Endothelial cell of umbilical vein (primary cell): ENCODE measurements at regions of chr7 and their contacts with region 1.

Region 1: DNA sequence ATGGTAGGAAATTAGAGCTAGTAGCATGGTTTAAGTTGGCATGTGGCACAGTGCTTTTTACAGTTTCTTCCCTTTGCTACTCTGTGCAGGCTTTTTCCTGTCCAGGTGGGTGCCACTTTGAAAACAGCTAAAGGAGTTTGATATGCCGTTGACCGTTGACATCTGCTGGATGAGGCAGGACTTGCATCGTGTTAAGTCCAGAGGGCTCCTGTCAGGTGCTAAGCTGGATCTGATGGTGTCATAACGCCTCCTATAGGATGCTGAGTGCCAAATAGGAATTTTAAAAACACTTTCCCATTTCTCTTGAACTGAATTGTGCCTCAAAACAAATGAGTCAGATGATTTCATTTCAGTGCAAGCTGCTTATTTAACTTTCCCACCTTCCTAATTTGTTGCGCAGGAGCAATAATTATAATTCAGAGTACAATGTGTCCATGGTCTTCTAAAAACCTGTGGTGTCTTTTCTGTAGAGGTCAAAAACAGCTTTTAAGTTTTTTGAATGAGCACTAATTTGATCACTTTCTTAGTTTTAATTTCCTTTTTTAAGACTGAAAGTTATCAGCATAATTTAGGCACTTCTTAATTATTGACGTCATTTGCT is 178.3 kb downstream of the CDCA7L start:
- DNase-seq: peak; percentile 60
- H3K4me3 ChIP-seq: no peak overlapping the region
- H3K27ac ChIP-seq: no peak overlapping the region
- H3K4me1 ChIP-seq: no peaks in the 10 kb centered on the region
- H3K27me3 ChIP-seq: peaks cover 8% of the 10 kb centered on the region in 2 experiments
- CTCF ChIP-seq: peak; percentile 42 to 47
- POLR2A ChIP-seq: no peak

Region 2: DNA sequence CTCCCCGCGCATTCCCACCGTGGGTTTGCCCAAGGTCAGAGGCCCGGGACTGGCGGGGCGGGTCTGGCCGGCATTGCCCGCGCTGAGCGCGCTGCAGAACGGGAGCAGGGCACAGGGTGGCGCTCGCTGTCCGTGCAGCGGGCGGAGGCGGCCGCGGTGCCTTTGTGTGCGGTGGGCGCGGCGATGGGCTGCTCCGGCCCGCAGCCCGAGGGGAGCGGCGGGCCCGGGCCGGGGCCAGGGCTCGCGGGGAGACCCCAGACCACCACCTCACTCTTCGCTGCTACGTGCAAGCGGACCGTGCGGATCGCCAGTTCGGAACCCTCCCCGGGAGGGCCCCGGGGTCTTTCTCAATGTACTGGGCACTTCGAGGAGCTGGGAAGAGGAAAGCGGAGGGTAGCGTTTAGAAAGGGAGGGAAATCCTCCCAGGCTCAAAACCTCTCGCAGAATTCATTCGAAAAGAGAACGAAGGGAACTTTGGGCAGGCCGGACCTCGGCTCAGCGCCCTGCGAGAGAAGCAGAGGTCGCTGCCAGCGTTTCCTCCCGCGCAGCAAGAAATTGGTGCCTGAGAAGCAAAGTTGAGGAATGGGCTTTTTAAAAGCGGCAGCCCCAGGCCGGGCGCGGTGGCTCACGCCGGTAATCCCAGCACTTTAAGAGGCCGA is 989.2 kb before region 1 on chr7:
- CTCF ChIA-PET with region 1: interaction called, 7 read pairs
- POLR2A ChIA-PET with region 1: no interaction called
- dilution Hi-C with region 1: no loop called
- intact Hi-C with region 1: loop called (anchors 2 kb)
- DNase-seq: peak; percentile 30
- H3K4me3 ChIP-seq: peak overlapping the region in 2 of 3 experiments; percentile 30 to 46
- H3K27ac ChIP-seq: no peak overlapping the region
- H3K4me1 ChIP-seq: peaks cover 5% of the 10 kb centered on the region
- H3K27me3 ChIP-seq: peaks cover 54 to 86% of the 10 kb centered on the region in 2 experiments
- CTCF ChIP-seq: peak; percentile 72 to 78
- POLR2A ChIP-seq: no peak

Region 3: GRCh38 chr7:21261627-21262594 is 505.5 kb before region 1 on chr7:
- CTCF ChIA-PET with region 1: interaction called, 35 read pairs
- POLR2A ChIA-PET with region 1: no interaction called
- dilution Hi-C with region 1: no loop called
- intact Hi-C with region 1: loop called (anchors 1 kb)
- DNase-seq: peak; percentile 67
- H3K4me3 ChIP-seq: no peak overlapping the region
- H3K27ac ChIP-seq: no peak overlapping the region
- H3K4me1 ChIP-seq: peaks cover 2% of the 10 kb centered on the region
- H3K27me3 ChIP-seq: no peaks in the 10 kb centered on the region
- CTCF ChIP-seq: peak; percentile 67 to 68
- POLR2A ChIP-seq: no peak